ENCODE measurements at regions of chr17 and their contacts with region 1.

Region 1: GRCh38 chr17:81034779-81035388 is at the start of gene BAIAP2:
- DNase-seq: peak; percentile 88 to 95 (median 94)
- ATAC-seq: peak; percentile 94
- H3K4me3 ChIP-seq: peak within 1 kb of the TSS; percentile 53
- H3K4me3 Mint-ChIP-seq: peak within 1 kb of the TSS; percentile 87 to 96 (median 92)
- H3K27ac ChIP-seq: peak within 1 kb of the TSS; percentile 67
- H3K27ac Mint-ChIP-seq: peak within 1 kb of the TSS in 8 of 9 donors; percentile 49 to 93 (median 87)
- H3K4me1 ChIP-seq: peaks cover 0 to 9% of the 10 kb centered on the region in 2 donors
- H3K4me1 Mint-ChIP-seq: peaks cover 5 to 27% (median 19%) of the 10 kb centered on the region in 7 donors
- H3K27me3 ChIP-seq: no peaks in the 10 kb centered on the region
- H3K27me3 Mint-ChIP-seq: peaks cover 0 to 50% (median 0%) of the 10 kb centered on the region in 5 donors
- total RNA-seq, gene BAIAP2: 7.3 to 13.7 (median 12.3) TPM

Region 2: GRCh38 chr17:79951361-79952264 is 1083.3 kb before region 1 on chr17:
- CTCF ChIA-PET with region 1: no interaction called
- POLR2A ChIA-PET with region 1: no interaction called
- intact Hi-C with region 1: no loop called
- DNase-seq: peak in 1 of 9 donors; percentile 3
- ATAC-seq: no peak
- H3K4me3 ChIP-seq: no peak overlapping the region
- H3K4me3 Mint-ChIP-seq: no peak overlapping the region
- H3K27ac ChIP-seq: no peak overlapping the region
- H3K27ac Mint-ChIP-seq: no peak overlapping the region
- H3K4me1 ChIP-seq: no peaks in the 10 kb centered on the region
- H3K4me1 Mint-ChIP-seq: no peaks in the 10 kb centered on the region
- H3K27me3 ChIP-seq: no peaks in the 10 kb centered on the region
- H3K27me3 Mint-ChIP-seq: no peaks in the 10 kb centered on the region

Region 3: GRCh38 chr17:80876950-80877728 is 157.7 kb before region 1 on chr17:
- CTCF ChIA-PET with region 1: no interaction called
- POLR2A ChIA-PET with region 1: no interaction called
- intact Hi-C with region 1: no loop called
- DNase-seq: peak in 6 of 9 donors; percentile 18 to 68 (median 36)
- ATAC-seq: peak; percentile 46
- H3K4me3 ChIP-seq: peak overlapping the region; percentile 22
- H3K4me3 Mint-ChIP-seq: peak overlapping the region; percentile 70 to 96 (median 79)
- H3K27ac ChIP-seq: peak overlapping the region; percentile 5
- H3K27ac Mint-ChIP-seq: peak overlapping the region; percentile 20 to 99 (median 86)
- H3K4me1 ChIP-seq: peaks cover 15 to 35% of the 10 kb centered on the region in 2 donors
- H3K4me1 Mint-ChIP-seq: peaks cover 31 to 55% (median 45%) of the 10 kb centered on the region in 7 donors
- H3K27me3 ChIP-seq: no peaks in the 10 kb centered on the region
- H3K27me3 Mint-ChIP-seq: no peaks in the 10 kb centered on the region

Region 4: GRCh38 chr17:80991645-80992076 is 43.2 kb before region 1 on chr17 and contains the start of gene CHMP6:
- CTCF ChIA-PET with region 1: interaction called, 4 read pairs
- POLR2A ChIA-PET with region 1: interaction called, 3 read pairs
- intact Hi-C with region 1: loop called (anchors 1 kb)
- DNase-seq: peak; percentile 60 to 84 (median 78)
- ATAC-seq: peak; percentile 89
- H3K4me3 ChIP-seq: peak within 1 kb of the TSS; percentile 94
- H3K4me3 Mint-ChIP-seq: peak within 1 kb of the TSS; percentile 71 to 88 (median 83)
- H3K27ac ChIP-seq: peak within 1 kb of the TSS; percentile 96
- H3K27ac Mint-ChIP-seq: peak within 1 kb of the TSS; percentile 78 to 90 (median 84)
- H3K4me1 ChIP-seq: peaks cover 14 to 25% of the 10 kb centered on the region in 2 donors
- H3K4me1 Mint-ChIP-seq: peaks cover 7 to 38% (median 21%) of the 10 kb centered on the region in 7 donors
- H3K27me3 ChIP-seq: no peaks in the 10 kb centered on the region
- H3K27me3 Mint-ChIP-seq: peaks cover 0 to 11% (median 0%) of the 10 kb centered on the region in 5 donors
- total RNA-seq, gene CHMP6: 26.4 to 49.9 (median 41.7) TPM

Region 5: DNA sequence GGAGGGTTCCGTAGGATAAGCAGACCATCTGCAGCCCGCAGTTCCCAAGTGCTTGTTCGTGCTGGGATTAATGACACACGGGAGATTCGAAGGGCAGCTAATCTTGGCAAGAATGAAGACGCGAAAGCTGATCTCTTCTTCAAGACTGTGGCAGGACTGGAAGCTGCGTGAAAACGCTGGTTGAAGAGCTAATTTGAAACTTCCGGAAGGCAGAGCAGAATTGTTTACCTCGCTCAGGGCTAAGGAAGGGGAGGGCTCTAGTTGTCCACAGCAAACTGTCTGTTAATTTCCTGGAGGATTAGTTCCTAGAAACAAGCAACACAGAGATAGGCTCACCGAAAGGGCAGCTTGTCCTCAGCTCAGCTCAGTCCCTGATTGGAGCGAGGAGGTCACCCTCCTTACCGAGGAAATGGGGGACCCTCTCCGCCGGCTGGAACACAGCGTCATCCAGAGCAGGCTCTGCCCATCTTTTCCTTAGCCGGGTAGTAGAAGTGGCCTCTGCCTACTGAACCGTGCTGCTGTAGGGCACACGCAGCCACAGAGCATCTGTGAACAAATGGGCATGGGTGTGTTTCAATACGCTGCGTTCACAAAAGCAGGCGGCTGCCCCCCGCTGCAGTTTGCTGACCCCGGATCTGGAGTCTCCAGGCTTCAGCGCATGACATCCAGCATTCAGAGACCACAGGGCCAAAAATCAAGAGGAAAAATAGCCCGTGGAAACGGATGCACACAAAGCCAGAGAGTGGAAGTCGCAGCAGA is 16.7 kb before region 1 on chr17:
- CTCF ChIA-PET with region 1: interaction called, 7 read pairs
- POLR2A ChIA-PET with region 1: interaction called, 9 read pairs
- intact Hi-C with region 1: loop called (anchors 1 to 2 kb)
- DNase-seq: peak in 7 of 9 donors; percentile 47 to 62 (median 55)
- ATAC-seq: peak; percentile 84
- H3K4me3 ChIP-seq: peak overlapping the region; percentile 74
- H3K4me3 Mint-ChIP-seq: peak overlapping the region; percentile 80 to 91 (median 88)
- H3K27ac ChIP-seq: peak overlapping the region; percentile 80
- H3K27ac Mint-ChIP-seq: peak overlapping the region; percentile 92 to 99 (median 95)
- H3K4me1 ChIP-seq: peaks cover 10 to 16% of the 10 kb centered on the region in 2 donors
- H3K4me1 Mint-ChIP-seq: peaks cover 20 to 49% (median 42%) of the 10 kb centered on the region in 7 donors
- H3K27me3 ChIP-seq: no peaks in the 10 kb centered on the region
- H3K27me3 Mint-ChIP-seq: no peaks in the 10 kb centered on the region

Region 6: GRCh38 chr17:81238817-81239600 is 204.1 kb after region 1 on chr17 and contains the starts of genes NDUFAF8 and TEPSIN:
- CTCF ChIA-PET with region 1: no interaction called
- POLR2A ChIA-PET with region 1: no interaction called
- intact Hi-C with region 1: loop called in 1 of 2 experiments (anchors 1 kb)
- DNase-seq: peak; percentile 87 to 98 (median 97)
- ATAC-seq: peak; percentile 98
- H3K4me3 ChIP-seq: peak within 1 kb of the TSS; percentile 71
- H3K4me3 Mint-ChIP-seq: peak within 1 kb of the TSS; percentile 92 to 97 (median 95)
- H3K27ac ChIP-seq: peak within 1 kb of the TSS; percentile 79
- H3K27ac Mint-ChIP-seq: peak within 1 kb of the TSS; percentile 86 to 95 (median 90)
- H3K4me1 ChIP-seq: peaks cover 22 to 24% of the 10 kb centered on the region in 2 donors
- H3K4me1 Mint-ChIP-seq: peaks cover 17 to 51% (median 38%) of the 10 kb centered on the region in 7 donors
- H3K27me3 ChIP-seq: no peaks in the 10 kb centered on the region
- H3K27me3 Mint-ChIP-seq: no peaks in the 10 kb centered on the region
- total RNA-seq, gene NDUFAF8: 34.2 to 45.6 (median 43.5) TPM
- total RNA-seq, gene TEPSIN: 52.6 to 115 (median 90.0) TPM

Region 7: GRCh38 chr17:82077617-82078358 is 1042.9 kb after region 1 on chr17:
- CTCF ChIA-PET with region 1: no interaction called
- POLR2A ChIA-PET with region 1: no interaction called
- intact Hi-C with region 1: no loop called
- DNase-seq: no peak
- ATAC-seq: no peak
- H3K4me3 ChIP-seq: no peak overlapping the region
- H3K4me3 Mint-ChIP-seq: no peak overlapping the region
- H3K27ac ChIP-seq: no peak overlapping the region
- H3K27ac Mint-ChIP-seq: no peak overlapping the region
- H3K4me1 ChIP-seq: no peaks in the 10 kb centered on the region
- H3K4me1 Mint-ChIP-seq: no peaks in the 10 kb centered on the region
- H3K27me3 ChIP-seq: no peaks in the 10 kb centered on the region
- H3K27me3 Mint-ChIP-seq: peaks cover 0 to 4% (median 0%) of the 10 kb centered on the region in 5 donors